HCT116 (cell line): ENCODE measurements at regions of chr6 and their contacts with region 1.

Region 1: DNA sequence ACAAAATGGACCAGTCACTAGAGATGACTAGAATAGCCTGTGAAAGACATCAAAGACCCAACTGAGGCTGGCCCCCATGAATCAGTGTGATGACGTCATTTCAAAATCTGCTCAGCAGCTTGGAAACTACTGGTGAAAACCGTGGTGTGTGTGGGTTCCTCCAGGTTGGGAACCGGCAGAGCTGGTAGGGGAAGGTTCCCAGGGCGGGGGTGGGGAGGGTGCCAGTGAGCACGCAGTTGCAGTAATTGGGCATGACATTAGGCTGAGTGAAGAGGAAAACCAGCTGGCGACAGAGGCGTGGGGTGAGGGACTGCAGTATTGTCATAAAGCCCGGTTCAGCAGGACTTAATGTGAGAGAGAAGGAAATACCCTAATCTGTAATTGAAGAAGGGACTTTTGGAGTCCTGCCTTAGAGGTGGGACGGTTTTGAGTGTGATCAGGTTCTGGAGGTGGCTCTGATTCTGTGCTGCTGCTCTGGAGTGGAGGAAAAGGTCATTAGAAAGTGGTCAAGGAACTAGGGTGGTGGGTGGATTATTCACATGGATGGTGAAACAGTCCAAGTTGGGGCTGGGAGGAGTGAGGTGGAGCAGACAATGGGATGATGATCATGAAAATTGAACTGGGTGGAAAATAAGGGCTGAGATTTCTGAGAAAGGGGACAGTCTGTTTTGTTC is 52.0 kb upstream of the MTHFD1L start:
- DNase-seq: peak; percentile 92
- ATAC-seq: peak; percentile 69
- H3K4me3 ChIP-seq: peak overlapping the region; percentile 11 to 47
- H3K27ac ChIP-seq: peak overlapping the region; percentile 90
- H3K4me1 ChIP-seq: peaks cover 30 to 39% of the 10 kb centered on the region in 2 experiments
- H3K27me3 ChIP-seq: no peaks in the 10 kb centered on the region
- CTCF ChIP-seq: no peak
- POLR2A ChIP-seq: no peak
- RAD21 ChIP-seq: peak; percentile 49

Region 2: DNA sequence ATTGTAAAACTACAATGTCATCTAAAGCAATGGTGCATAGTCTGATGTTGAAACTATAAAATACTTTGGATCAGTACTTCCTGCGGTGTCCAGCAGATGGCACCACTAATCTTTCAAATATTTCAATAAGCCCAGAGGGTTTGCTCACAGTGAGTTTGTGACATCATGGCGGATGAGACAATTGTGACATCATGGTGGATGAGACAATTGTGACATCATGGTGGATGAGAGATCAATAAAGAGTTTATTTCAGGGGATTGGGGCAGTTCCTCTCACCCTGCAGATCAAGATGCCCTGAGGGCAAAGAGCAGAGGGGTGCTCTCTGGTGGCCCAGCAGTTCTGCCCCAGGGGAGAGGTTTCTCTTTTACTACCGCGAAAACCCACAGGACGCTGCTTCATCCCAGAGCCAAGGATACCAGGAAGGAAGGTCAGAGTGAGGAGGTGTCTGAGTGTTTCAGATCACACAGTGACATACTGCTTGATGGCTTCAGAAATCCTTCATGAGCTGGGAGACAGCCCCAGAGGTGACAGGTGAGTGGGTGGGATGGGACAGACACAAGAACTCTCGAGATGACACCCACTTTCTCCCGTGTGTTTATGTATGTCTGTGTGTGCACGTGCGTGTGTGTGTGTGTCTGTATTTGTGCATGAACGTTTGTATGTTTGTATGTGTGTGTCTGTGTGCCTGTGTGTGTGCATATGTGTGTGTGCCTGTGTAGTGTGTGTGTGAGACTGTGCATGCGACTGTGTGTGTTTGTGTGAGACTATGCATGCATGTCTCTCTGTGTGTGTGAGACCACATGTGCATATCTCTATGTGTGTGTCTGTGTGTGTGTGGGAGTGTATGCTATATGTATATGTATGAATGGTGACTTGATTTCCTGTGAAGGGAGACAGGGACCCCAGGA is 879.0 kb before region 1 on chr6:
- CTCF ChIA-PET with region 1: interaction called, 3 read pairs
- POLR2A ChIA-PET with region 1: no interaction called
- RAD21 ChIA-PET with region 1: no interaction called
- intact Hi-C with region 1: loop called (anchors 1 kb)
- DNase-seq: peak; percentile 76
- ATAC-seq: peak; percentile 67
- H3K4me3 ChIP-seq: no peak overlapping the region
- H3K27ac ChIP-seq: no peak overlapping the region
- H3K4me1 ChIP-seq: peaks cover 0 to 3% of the 10 kb centered on the region in 2 experiments; a peak in 1 of 4 replicates
- H3K27me3 ChIP-seq: no peaks in the 10 kb centered on the region
- CTCF ChIP-seq: peak; percentile 63 to 88 (median 87)
- POLR2A ChIP-seq: no peak
- RAD21 ChIP-seq: peak; percentile 96

Region 3: GRCh38 chr6:150079604-150080003 is 733.9 kb before region 1 on chr6:
- CTCF ChIA-PET with region 1: interaction called, 29 read pairs
- POLR2A ChIA-PET with region 1: no interaction called
- RAD21 ChIA-PET with region 1: interaction called, 3 read pairs
- intact Hi-C with region 1: loop called (anchors 1 kb)
- DNase-seq: no peak
- ATAC-seq: no peak
- H3K4me3 ChIP-seq: no peak overlapping the region
- H3K27ac ChIP-seq: no peak overlapping the region
- H3K4me1 ChIP-seq: peaks cover 2 to 20% of the 10 kb centered on the region in 2 experiments; a peak in 3 of 4 replicates
- H3K27me3 ChIP-seq: no peaks in the 10 kb centered on the region
- CTCF ChIP-seq: no peak
- POLR2A ChIP-seq: no peak
- RAD21 ChIP-seq: no peak

Region 4: DNA sequence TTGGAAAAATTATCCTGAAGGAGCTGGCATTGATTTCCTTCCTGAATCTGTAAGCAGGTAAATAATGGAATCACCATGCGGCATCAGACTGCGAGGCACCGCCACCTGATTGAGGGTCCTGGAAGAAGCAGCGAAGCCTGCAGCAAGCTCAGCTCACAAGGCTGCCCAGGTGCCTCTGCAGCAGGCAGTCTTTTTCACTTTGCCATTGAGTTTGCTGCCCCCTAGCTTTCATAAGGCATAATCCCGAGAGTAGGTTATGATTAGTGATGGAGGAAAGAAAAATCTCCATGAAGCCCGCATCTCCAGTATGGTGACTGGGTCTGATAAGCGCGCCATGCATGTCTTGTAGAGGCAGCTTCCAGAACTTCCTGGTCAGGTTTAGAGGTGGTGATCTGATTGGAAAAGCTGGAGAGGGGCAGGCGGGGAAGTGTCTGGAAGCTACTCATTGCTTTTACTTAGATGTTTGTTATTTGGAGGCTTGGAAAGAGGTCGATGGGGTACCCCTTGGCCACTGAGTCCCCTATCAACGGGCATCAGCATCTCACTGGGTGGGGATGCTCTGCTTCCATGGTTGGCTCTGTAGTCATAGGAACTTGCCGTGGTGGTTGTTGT is 418.0 kb before region 1 on chr6:
- CTCF ChIA-PET with region 1: interaction called, 14 read pairs
- POLR2A ChIA-PET with region 1: no interaction called
- RAD21 ChIA-PET with region 1: interaction called in 1 of 2 experiments, 3 read pairs
- intact Hi-C with region 1: no loop called
- DNase-seq: peak; percentile 49
- ATAC-seq: peak; percentile 97
- H3K4me3 ChIP-seq: no peak overlapping the region
- H3K27ac ChIP-seq: no peak overlapping the region
- H3K4me1 ChIP-seq: peaks cover 0 to 3% of the 10 kb centered on the region in 2 experiments; a peak in 1 of 4 replicates
- H3K27me3 ChIP-seq: no peaks in the 10 kb centered on the region
- CTCF ChIP-seq: peak; percentile 69 to 89 (median 83)
- POLR2A ChIP-seq: no peak
- RAD21 ChIP-seq: peak; percentile 95

Region 5: DNA sequence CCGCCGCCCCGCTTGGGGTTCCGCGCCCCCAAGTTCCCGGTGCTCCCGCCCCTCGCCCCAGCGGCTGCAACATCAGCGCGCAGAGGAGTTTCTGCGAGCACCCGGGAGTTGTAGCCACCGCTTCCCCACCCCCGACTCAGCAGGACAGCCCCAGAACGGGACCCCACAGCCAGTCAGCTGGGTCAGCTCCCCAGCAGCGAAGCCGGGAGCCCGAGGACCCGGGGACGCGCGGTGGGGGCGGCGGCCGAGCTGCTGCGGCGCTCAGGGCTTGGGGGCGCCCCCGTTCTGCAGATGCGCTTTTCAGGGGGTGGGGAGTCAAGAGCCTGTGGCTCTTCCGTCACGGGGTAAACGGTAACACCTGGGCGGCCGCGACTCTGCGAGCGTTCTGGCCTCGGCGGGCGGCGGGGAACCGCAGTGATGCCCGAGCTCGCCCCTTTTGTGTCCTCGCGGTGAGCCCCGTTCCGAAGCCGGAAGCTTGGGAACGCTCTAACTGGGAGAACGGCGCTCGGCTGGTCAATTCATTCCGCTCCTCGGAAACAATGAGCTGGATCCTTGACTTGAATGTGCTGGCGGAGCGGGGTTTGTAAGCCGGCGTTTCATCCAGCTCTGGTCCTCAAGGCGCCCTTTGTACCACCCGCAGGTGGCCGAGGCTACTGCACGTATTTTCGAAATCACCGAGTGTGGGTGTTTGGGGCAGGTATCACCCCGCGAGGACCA is 213.0 kb before region 1 on chr6:
- CTCF ChIA-PET with region 1: interaction called, 10 read pairs
- POLR2A ChIA-PET with region 1: interaction called, 5 read pairs
- RAD21 ChIA-PET with region 1: interaction called in 1 of 2 experiments, 3 read pairs
- intact Hi-C with region 1: no loop called
- DNase-seq: peak; percentile 72
- ATAC-seq: peak; percentile 83
- H3K4me3 ChIP-seq: peak overlapping the region; percentile 61 to 72
- H3K27ac ChIP-seq: peak overlapping the region; percentile 46; the same call in 1 of the 2 replicates
- H3K4me1 ChIP-seq: peaks cover 4 to 13% of the 10 kb centered on the region in 2 experiments; a peak in 2 of 4 replicates
- H3K27me3 ChIP-seq: no peaks in the 10 kb centered on the region
- CTCF ChIP-seq: peak; percentile 10 to 55 (median 48); a peak in 4 of 6 replicates
- POLR2A ChIP-seq: no peak
- RAD21 ChIP-seq: peak; percentile 56

Region 6: DNA sequence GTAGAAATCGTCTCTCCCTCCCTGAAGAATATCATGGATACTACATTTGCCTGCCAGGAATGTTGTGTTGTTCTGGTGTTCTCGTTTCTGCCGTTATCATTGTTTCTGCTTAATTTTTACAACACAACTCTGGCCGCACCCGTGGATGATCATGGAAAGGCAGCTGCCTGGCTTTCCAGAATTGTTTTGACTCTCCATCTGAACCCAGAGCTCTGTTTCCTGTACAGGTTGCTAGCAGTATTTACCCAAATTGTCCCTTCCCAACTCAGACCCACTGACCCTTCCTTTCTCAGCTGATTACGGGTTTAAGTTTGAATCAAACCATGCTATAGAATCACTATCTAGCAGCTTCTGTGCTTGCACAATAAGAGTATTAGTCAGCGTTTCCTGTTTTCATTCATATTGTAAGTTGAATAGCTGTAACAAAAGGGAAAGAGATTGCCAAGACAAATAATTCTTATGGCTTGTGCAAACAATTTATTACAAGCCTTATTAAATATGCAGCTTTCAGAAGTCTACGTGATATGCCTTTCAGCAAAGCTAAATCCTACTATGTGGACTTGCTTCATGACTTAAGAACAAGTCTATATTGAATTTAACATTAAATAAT is 191.1 kb after region 1 on chr6:
- CTCF ChIA-PET with region 1: no interaction called
- POLR2A ChIA-PET with region 1: no interaction called
- RAD21 ChIA-PET with region 1: no interaction called
- intact Hi-C with region 1: no loop called
- DNase-seq: no peak
- ATAC-seq: no peak
- H3K4me3 ChIP-seq: no peak overlapping the region
- H3K27ac ChIP-seq: peak overlapping the region; percentile 47
- H3K4me1 ChIP-seq: peaks cover 17 to 33% of the 10 kb centered on the region in 2 experiments; a peak in 3 of 4 replicates
- H3K27me3 ChIP-seq: no peaks in the 10 kb centered on the region
- CTCF ChIP-seq: no peak
- POLR2A ChIP-seq: no peak
- RAD21 ChIP-seq: no peak

Region 7: GRCh38 chr6:151330134-151330696 is 516.8 kb after region 1 on chr6:
- CTCF ChIA-PET with region 1: interaction called, 19 read pairs
- POLR2A ChIA-PET with region 1: interaction called, 3 read pairs
- RAD21 ChIA-PET with region 1: no interaction called
- intact Hi-C with region 1: loop called (anchors 2 kb)
- DNase-seq: no peak
- ATAC-seq: no peak
- H3K4me3 ChIP-seq: no peak overlapping the region
- H3K27ac ChIP-seq: peak overlapping the region; percentile 69
- H3K4me1 ChIP-seq: peaks cover 6 to 74% of the 10 kb centered on the region in 2 experiments; a peak in 3 of 4 replicates
- H3K27me3 ChIP-seq: no peaks in the 10 kb centered on the region
- CTCF ChIP-seq: no peak
- POLR2A ChIP-seq: no peak
- RAD21 ChIP-seq: no peak